ENCODE measurements at regions of chr12 and their contacts with region 1.

Region 1: DNA sequence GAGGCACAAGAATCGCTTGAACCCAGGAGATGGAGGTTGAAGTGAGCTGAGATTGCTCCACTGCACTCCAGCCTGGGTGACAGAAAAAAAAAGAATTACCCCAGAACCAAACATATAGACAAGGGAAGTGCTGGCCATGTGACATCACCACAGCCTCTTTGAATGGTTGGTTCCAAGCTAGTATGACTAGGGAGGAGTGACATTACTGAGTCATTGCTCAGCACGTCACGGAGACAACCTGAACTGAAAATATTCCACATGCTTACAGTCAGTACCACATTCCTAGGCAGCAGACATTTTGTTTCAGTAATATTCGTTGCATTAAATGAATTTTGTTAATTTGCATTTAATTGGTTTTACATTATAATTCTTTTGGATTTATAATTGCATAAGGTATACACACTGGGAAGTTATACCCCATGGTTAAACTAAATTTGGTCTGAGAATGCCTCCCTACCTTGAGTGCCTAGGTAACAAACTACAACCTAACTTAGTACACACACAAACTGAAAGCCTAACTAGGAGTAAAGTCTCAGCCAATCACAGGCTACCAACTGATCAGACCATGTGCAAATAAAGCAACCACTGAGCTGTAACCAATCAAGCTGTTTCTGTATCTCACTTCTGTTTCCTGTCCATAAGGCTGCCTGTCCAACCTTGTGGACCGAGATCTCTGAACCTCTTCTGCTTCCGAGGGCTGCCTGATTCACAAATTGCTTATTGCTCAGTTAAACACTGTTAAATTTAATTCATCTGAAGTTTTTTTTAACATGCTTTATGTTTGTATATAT is 164.4 kb downstream of the CAND1 start:
- DNase-seq: no peak
- ATAC-seq: no peak

Region 2: DNA sequence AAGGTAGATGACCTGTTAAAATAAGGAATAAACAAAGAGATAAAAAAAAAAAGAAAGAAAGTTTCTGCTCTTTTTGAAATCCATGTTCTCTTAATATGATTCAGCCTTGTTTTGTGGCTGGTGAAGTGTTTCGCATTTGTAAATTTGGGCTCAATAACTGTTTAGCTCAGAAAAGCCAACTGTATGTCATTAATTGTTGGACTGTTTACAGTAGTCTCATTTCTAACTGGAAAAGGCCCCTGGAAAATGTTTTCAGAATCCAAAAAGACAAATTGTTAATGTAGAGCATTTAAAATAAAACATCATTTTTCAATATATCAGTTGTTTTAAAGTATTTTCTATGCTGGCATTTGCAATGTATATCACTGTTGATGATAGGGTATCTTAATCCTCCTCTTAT is 167.5 kb after region 1 on chr12:
- intact Hi-C with region 1: no loop called
- DNase-seq: no peak
- ATAC-seq: no peak

Region 3: GRCh38 chr12:67710582-67710981 is 277.0 kb after region 1 on chr12:
- intact Hi-C with region 1: loop called (anchors 10 kb)
- DNase-seq: no peak
- ATAC-seq: peak; percentile 36